ENCODE measurements at regions of chr10 and their contacts with region 1.

Region 1: GRCh38 chr10:101569838-101570766 is 18.0 kb downstream of the POLL start:
- DNase-seq: peak; percentile 80 to 88
- ATAC-seq: peak; percentile 87 to 94 (median 90)
- H3K4me3 ChIP-seq: peak overlapping the region; percentile 76
- H3K27ac ChIP-seq: no peak overlapping the region
- H3K4me1 ChIP-seq: no peaks in the 10 kb centered on the region
- H3K27me3 ChIP-seq: peaks cover 0 to 46% (median 11%) of the 10 kb centered on the region in 3 donors
- CTCF ChIP-seq: peak; percentile 88

Region 2: GRCh38 chr10:101161494-101162299 is 408.4 kb before region 1 on chr10:
- intact Hi-C with region 1: loop called (anchors 2 to 5 kb)
- DNase-seq: peak; percentile 61 to 74
- ATAC-seq: peak; percentile 84 to 97 (median 96)
- H3K4me3 ChIP-seq: peak overlapping the region; percentile 53
- H3K27ac ChIP-seq: no peak overlapping the region
- H3K4me1 ChIP-seq: no peaks in the 10 kb centered on the region
- H3K27me3 ChIP-seq: peaks cover 0 to 39% (median 4%) of the 10 kb centered on the region in 3 donors
- CTCF ChIP-seq: peak; percentile 94

Region 3: GRCh38 chr10:101297901-101298486 is 272.1 kb before region 1 on chr10:
- intact Hi-C with region 1: loop called (anchors 1 to 5 kb)
- DNase-seq: peak; percentile 59 to 86
- ATAC-seq: peak; percentile 67 to 85 (median 80)
- H3K4me3 ChIP-seq: no peak overlapping the region
- H3K27ac ChIP-seq: peak overlapping the region; percentile 68
- H3K4me1 ChIP-seq: peaks cover 25% of the 10 kb centered on the region
- H3K27me3 ChIP-seq: peaks cover 0 to 4% (median 0%) of the 10 kb centered on the region in 3 donors
- CTCF ChIP-seq: peak; percentile 87

Region 4: DNA sequence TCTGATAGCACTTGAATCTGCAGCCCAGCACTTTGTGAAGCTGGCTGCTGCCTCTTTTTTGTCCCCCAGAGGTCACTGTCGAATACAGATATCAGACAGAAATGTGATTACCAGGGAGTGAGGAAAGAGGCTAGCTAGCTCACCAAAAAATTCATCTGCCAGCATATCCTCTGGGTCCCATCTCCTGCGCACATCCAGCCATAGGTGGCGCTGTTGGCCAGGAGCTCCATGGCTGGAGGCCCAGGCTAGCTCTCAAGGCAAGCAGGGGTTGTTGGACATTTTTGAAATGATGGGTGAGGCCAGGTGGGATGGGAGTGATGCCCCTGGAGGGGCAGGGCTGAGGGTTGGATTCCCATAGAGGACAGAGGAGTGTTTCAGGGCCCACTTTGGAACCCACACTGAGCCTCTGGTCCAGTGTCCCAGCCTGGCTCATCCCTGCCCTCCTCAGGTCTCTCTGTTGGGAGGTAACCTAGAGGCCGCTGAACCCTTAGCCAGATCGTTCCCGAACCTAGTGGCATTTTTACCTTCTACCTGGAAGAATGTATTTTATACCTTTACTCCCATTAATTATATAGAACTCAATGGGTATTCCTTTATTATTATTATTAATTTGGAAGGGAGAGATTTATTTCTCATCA is 32.8 kb after region 1 on chr10:
- intact Hi-C with region 1: no loop called
- DNase-seq: peak; percentile 70 to 86
- ATAC-seq: peak; percentile 86 to 94 (median 90)
- H3K4me3 ChIP-seq: no peak overlapping the region
- H3K27ac ChIP-seq: no peak overlapping the region
- H3K4me1 ChIP-seq: no peaks in the 10 kb centered on the region
- H3K27me3 ChIP-seq: no peaks in the 10 kb centered on the region
- CTCF ChIP-seq: peak; percentile 87